ENCODE measurements at regions of chr20 and their contacts with region 1.

Region 1: GRCh38 chr20:61886721-61887594 is 178.7 kb downstream of the TAF4 start:
- DNase-seq: peak; percentile 53
- H3K4me3 ChIP-seq: no peak overlapping the region
- H3K27ac ChIP-seq: no peak overlapping the region
- H3K4me1 ChIP-seq: no peaks in the 10 kb centered on the region
- H3K27me3 ChIP-seq: peaks cover 4% of the 10 kb centered on the region; the same call in 1 of the 2 replicates

Region 2: GRCh38 chr20:60057123-60057801 is 1829.7 kb before region 1 on chr20:
- in situ Hi-C with region 1: loop called (anchors 25 kb)
- DNase-seq: peak; percentile 79
- H3K4me3 ChIP-seq: no peak overlapping the region
- H3K27ac ChIP-seq: no peak overlapping the region
- H3K4me1 ChIP-seq: peaks cover 12% of the 10 kb centered on the region
- H3K27me3 ChIP-seq: no peaks in the 10 kb centered on the region

Region 3: DNA sequence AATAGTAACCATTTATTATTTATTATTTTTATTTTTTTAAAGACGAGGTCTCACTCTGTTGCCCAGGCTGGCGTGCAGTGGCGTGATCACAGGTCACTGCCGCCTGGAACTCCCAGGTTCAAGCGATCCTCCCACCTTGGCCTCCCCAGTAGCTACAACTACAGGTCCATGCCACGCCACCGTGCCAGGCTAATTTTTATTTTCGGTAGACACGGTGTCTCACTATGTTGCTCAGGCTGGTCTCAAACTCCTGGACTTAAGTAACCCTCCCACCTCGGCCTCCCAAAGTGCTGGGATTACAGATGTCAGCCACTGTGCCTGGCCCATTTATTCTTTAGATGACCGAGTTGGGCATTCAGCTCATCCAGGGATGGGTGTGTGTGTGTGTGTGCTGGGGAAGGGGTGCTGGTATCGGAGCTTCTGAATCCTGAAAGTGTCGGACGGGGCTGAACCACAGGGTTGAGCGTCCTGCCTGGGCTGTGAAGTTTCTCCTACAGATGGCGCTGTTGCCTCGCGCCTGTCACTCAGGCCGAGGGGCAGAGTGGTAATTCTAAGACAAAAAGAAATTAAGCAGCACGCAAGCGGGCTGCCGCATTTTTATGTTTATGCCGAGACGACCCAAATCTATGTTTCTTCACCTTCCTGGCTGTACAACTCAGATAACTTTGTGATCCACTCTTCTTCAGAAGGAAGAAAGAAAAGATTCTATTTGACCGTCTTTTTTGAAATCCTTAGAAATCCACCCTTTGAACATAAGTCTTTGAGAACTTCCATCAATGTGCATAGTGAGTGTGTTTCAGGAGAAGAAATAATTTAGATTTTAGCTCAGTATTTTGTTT is 1676.0 kb before region 1 on chr20:
- in situ Hi-C with region 1: loop called (anchors 25 kb)
- DNase-seq: peak; percentile 67
- H3K4me3 ChIP-seq: peak overlapping the region; percentile 41
- H3K27ac ChIP-seq: no peak overlapping the region
- H3K4me1 ChIP-seq: no peaks in the 10 kb centered on the region
- H3K27me3 ChIP-seq: no peaks in the 10 kb centered on the region

Measured in GM23248 (cell line).